Mammary epithelial cell (primary cell): ENCODE measurements at regions of chr11 and their contacts with region 1.

Region 1: GRCh38 chr11:3217676-3218482 is 734 bp downstream of the MRGPRG start:
- DNase-seq: no peak
- H3K4me3 ChIP-seq: no peak overlapping the region
- H3K27ac ChIP-seq: no peak overlapping the region
- H3K4me1 ChIP-seq: no peaks in the 10 kb centered on the region
- H3K27me3 ChIP-seq: peaks cover 3% of the 10 kb centered on the region
- CTCF ChIP-seq: no peak

Region 2: GRCh38 chr11:3049430-3050243 is 168.2 kb before region 1 on chr11:
- CTCF ChIA-PET with region 1: no interaction called
- dilution Hi-C with region 1: no loop called
- in situ Hi-C with region 1: no loop called
- intact Hi-C with region 1: loop called (anchors 2 kb)
- DNase-seq: peak; percentile 88
- H3K4me3 ChIP-seq: no peak overlapping the region
- H3K27ac ChIP-seq: peak overlapping the region; percentile 46
- H3K4me1 ChIP-seq: peaks cover 14% of the 10 kb centered on the region
- H3K27me3 ChIP-seq: no peaks in the 10 kb centered on the region
- CTCF ChIP-seq: peak; percentile 34 to 59

Region 3: DNA sequence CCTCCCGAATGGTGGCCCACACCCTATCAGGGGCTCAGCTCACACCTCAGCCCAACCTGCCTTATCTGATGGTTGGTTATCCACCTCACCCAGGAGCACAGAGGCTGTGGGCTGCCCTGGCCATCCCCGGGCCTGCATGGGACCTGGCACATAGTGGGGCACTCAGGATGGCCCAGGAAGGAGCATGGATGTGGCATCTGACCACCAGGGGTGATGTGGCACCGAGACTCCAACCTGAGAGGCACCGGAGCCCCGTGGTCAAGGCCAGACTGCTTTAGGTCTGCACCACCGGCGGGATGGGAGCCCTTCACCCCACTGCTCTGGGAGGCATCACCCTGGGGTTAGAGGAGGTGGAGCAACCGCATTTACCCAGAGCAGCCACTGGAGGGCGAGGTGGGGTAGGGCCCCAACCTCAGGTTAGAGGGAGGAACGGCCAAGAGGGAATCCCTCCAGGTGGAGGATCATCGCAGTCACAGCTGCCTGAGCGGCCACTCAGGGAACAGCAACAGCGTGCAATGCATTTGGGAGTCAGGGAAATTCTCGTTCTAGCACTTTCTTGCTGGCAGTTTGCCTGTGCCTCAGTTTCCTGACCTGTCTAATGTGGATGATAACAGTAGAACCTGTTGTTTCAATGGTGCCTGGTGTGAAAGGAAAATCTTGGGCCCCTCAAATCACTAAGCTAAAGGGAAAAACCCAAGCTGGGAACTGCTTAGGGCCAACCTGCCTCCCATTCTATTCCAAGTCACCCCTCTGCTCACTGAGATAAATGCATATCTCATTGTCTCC is 107.8 kb before region 1 on chr11:
- CTCF ChIA-PET with region 1: no interaction called
- dilution Hi-C with region 1: no loop called
- in situ Hi-C with region 1: loop called (anchors 5 to 10 kb)
- intact Hi-C with region 1: loop called (anchors 1 kb)
- DNase-seq: peak; percentile 34
- H3K4me3 ChIP-seq: no peak overlapping the region
- H3K27ac ChIP-seq: no peak overlapping the region
- H3K4me1 ChIP-seq: no peaks in the 10 kb centered on the region
- H3K27me3 ChIP-seq: no peaks in the 10 kb centered on the region
- CTCF ChIP-seq: peak; percentile 61 to 77

Region 4: DNA sequence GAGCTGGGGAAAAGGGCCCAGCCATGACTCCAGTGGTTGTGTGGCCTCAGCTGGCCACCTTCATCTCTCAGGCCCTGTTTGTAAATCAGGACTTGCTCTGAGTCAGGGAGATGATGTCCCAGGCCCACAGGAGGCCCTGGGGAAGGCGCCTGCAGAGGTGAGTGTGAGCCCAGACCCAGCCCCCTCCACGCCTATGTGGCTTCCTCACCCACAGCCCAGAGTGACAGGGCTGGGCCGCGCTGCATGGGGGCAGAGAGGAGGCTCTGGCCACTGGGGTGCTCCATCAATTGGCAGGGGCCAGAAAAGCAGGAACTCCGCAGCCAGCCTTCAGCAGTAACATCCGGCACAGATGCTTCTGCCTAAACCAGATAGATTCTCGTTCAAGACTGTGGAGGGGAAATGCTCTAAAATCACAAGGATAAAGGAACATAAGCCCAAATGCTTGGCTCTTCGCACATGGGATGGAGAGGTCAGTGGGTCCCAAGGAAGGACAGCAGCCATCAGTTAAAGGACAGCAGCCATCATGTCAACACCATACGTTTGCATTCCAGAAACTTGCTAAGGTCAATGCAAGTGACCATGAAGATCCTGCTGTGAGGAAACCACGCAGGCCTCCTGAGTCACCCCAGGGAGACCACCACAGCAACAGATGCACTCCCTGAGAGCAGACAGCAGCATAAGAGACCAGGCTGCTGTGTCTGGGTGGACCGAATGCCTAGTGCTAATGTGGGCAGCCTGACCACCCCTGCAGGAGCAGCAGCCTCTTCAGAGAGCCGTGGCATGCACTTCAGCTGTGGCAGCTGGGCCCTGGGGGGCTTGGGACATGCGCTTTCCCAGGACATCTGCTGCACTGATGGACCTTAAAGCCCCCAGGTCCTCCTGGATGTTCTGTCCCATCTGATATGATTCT is 81.1 kb before region 1 on chr11:
- CTCF ChIA-PET with region 1: no interaction called
- dilution Hi-C with region 1: no loop called
- in situ Hi-C with region 1: no loop called
- intact Hi-C with region 1: no loop called
- DNase-seq: no peak
- H3K4me3 ChIP-seq: no peak overlapping the region
- H3K27ac ChIP-seq: no peak overlapping the region
- H3K4me1 ChIP-seq: no peaks in the 10 kb centered on the region
- H3K27me3 ChIP-seq: no peaks in the 10 kb centered on the region
- CTCF ChIP-seq: no peak

Region 5: GRCh38 chr11:3237119-3237518 is 19.2 kb after region 1 on chr11:
- CTCF ChIA-PET with region 1: no interaction called
- dilution Hi-C with region 1: no loop called
- in situ Hi-C with region 1: no loop called
- intact Hi-C with region 1: no loop called
- DNase-seq: no peak
- H3K4me3 ChIP-seq: no peak overlapping the region
- H3K27ac ChIP-seq: no peak overlapping the region
- H3K4me1 ChIP-seq: no peaks in the 10 kb centered on the region
- H3K27me3 ChIP-seq: no peaks in the 10 kb centered on the region
- CTCF ChIP-seq: no peak